ENCODE measurements at regions of chr19 and their contacts with region 1.

Region 1: DNA sequence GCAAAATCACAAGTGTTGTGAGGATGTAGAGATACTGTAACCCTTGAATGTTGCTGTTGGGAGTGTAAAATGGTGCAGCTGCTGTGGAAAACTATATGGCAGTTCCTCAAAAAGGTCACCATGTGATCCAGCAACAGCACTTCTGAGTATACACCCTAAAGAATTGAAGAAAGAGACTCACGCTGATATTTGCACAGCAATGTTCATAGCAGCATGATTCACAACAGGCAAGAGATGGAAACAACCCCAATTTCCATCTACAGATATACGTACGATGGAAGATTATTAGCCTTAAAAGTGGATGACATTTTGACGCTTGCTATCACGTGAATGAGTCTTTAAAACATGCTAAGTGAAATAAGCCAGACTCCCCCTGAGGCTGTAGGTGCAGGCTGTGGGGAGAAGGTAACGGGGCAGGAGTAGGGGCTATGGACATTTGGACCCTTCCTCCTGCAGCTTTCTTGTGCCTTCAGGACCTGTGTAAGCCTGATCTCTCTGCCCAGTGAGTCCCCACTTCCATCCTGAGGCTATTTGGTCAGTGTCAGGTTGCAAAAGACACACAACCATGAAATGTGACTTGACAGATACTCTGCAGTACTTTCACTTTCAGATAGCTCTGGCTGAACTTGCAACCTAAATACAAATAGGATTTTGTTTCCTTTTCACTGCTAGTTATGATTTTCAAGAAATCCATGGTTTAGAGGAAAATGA is 17.6 kb upstream of the EID2 start:
- DNase-seq: no peak
- ATAC-seq: peak in 1 of 2 experiments; percentile 52; a peak in 3 of 6 replicates
- H3K4me3 ChIP-seq: no peak overlapping the region
- H3K27ac ChIP-seq: no peak overlapping the region
- H3K4me1 ChIP-seq: no peaks in the 10 kb centered on the region
- CTCF ChIP-seq: no peak
- EP300 ChIP-seq: no peak
- POLR2A ChIP-seq: no peak
- RAD21 ChIP-seq: no peak

Region 2: GRCh38 chr19:39576511-39576910 is 18.9 kb after region 1 on chr19:
- CTCF ChIA-PET with region 1: no interaction called
- POLR2A ChIA-PET with region 1: no interaction called
- DNase-seq: no peak
- ATAC-seq: no peak
- H3K4me3 ChIP-seq: no peak overlapping the region
- H3K27ac ChIP-seq: no peak overlapping the region
- H3K4me1 ChIP-seq: no peaks in the 10 kb centered on the region
- CTCF ChIP-seq: no peak
- EP300 ChIP-seq: no peak
- POLR2A ChIP-seq: no peak
- RAD21 ChIP-seq: no peak

Region 3: GRCh38 chr19:39701291-39701690 is 143.7 kb after region 1 on chr19:
- CTCF ChIA-PET with region 1: interaction called, 17 read pairs
- POLR2A ChIA-PET with region 1: no interaction called
- DNase-seq: no peak
- ATAC-seq: no peak
- H3K4me3 ChIP-seq: no peak overlapping the region
- H3K27ac ChIP-seq: no peak overlapping the region
- H3K4me1 ChIP-seq: no peaks in the 10 kb centered on the region; the same call in 2 of the 3 replicates
- CTCF ChIP-seq: no peak
- EP300 ChIP-seq: no peak
- POLR2A ChIP-seq: no peak
- RAD21 ChIP-seq: no peak